ENCODE measurements at regions of chr1 and their contacts with region 1.

Region 1: DNA sequence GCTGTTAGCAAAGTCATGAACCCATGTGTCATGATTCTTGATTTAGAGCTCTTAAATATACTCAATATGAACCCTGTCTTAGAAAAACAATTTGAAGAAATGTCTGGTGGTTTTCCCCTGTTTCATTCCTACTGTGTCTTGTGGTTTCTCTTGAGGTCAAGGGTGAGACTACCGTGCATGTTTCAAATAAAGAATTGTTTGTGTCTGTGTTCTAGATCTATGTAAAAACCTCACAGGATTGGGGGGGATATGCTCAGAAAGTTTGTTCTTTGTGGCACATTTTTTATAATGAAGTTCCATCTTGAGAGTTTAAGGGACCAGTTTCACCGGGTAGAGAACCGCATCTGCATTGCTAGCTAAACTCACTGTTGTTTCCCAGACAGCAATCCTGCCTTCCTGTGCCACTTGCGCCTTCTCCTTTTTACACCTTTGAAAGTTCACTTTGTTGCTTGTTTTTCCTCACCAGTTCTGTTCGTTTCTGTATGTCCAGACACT is 30.9 kb upstream of the CACYBP start:
- DNase-seq: peak; percentile 26
- H3K4me3 Mint-ChIP-seq: peak overlapping the region; percentile 68
- H3K27ac Mint-ChIP-seq: peak overlapping the region; percentile 90
- H3K4me1 Mint-ChIP-seq: peaks cover 75% of the 10 kb centered on the region
- H3K27me3 Mint-ChIP-seq: no peaks in the 10 kb centered on the region

Region 2: DNA sequence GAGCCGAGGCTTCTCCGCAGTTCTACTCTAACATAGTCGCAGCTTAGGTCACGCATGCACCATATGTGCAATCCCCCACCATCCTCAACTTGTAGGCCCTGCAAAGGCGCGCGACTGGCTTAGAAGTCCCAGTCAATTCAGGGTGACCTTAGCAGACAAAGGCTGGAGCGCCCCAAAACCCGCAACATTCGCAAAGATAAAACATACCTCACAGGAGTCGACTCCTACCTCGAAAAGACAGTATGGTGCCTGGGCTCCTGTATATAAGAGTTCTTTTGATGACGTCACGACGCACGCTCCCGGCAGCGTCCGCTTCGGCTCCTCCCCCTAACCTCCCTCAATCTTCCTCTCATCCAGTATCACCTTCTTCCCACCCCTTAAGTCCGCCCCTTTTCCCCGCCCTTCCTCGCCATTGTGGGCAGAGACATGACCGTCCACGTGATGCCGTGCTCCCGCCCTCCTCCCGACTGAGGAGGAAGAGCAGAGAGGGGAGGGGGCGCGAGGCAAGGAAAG is 1101.0 kb before region 1 on chr1 and contains the start of gene GAS5:
- CTCF ChIA-PET with region 1: no interaction called
- POLR2A ChIA-PET with region 1: no interaction called
- intact Hi-C with region 1: loop called (anchors 1 kb)
- DNase-seq: peak; percentile 100
- H3K4me3 Mint-ChIP-seq: peak within 1 kb of the TSS; percentile 99
- H3K27ac Mint-ChIP-seq: peak within 1 kb of the TSS; percentile 98
- H3K4me1 Mint-ChIP-seq: peaks cover 68% of the 10 kb centered on the region
- H3K27me3 Mint-ChIP-seq: peaks cover 3% of the 10 kb centered on the region
- total RNA-seq, gene GAS5: 913 to 929 TPM

Region 3: GRCh38 chr1:174204697-174205308 is 764.0 kb before region 1 on chr1:
- CTCF ChIA-PET with region 1: no interaction called
- POLR2A ChIA-PET with region 1: interaction called, 3 read pairs
- intact Hi-C with region 1: loop called (anchors 5 kb)
- DNase-seq: peak; percentile 47
- H3K4me3 Mint-ChIP-seq: peak overlapping the region; percentile 38
- H3K27ac Mint-ChIP-seq: peak overlapping the region; percentile 76
- H3K4me1 Mint-ChIP-seq: peaks cover 59% of the 10 kb centered on the region
- H3K27me3 Mint-ChIP-seq: no peaks in the 10 kb centered on the region

Region 4: GRCh38 chr1:174815036-174815435 is 153.8 kb before region 1 on chr1:
- CTCF ChIA-PET with region 1: no interaction called
- POLR2A ChIA-PET with region 1: interaction called, 3 read pairs
- intact Hi-C with region 1: loop called (anchors 2 kb)
- DNase-seq: peak; percentile 60
- H3K4me3 Mint-ChIP-seq: no peak overlapping the region
- H3K27ac Mint-ChIP-seq: no peak overlapping the region
- H3K4me1 Mint-ChIP-seq: peaks cover 33% of the 10 kb centered on the region
- H3K27me3 Mint-ChIP-seq: no peaks in the 10 kb centered on the region

Region 5: GRCh38 chr1:174912264-174912663 is 56.5 kb before region 1 on chr1:
- CTCF ChIA-PET with region 1: interaction called, 4 read pairs
- POLR2A ChIA-PET with region 1: interaction called, 5 read pairs
- intact Hi-C with region 1: loop called (anchors 1 kb)
- DNase-seq: peak; percentile 69
- H3K4me3 Mint-ChIP-seq: no peak overlapping the region
- H3K27ac Mint-ChIP-seq: peak overlapping the region; percentile 33
- H3K4me1 Mint-ChIP-seq: peaks cover 59% of the 10 kb centered on the region
- H3K27me3 Mint-ChIP-seq: no peaks in the 10 kb centered on the region

Region 6: DNA sequence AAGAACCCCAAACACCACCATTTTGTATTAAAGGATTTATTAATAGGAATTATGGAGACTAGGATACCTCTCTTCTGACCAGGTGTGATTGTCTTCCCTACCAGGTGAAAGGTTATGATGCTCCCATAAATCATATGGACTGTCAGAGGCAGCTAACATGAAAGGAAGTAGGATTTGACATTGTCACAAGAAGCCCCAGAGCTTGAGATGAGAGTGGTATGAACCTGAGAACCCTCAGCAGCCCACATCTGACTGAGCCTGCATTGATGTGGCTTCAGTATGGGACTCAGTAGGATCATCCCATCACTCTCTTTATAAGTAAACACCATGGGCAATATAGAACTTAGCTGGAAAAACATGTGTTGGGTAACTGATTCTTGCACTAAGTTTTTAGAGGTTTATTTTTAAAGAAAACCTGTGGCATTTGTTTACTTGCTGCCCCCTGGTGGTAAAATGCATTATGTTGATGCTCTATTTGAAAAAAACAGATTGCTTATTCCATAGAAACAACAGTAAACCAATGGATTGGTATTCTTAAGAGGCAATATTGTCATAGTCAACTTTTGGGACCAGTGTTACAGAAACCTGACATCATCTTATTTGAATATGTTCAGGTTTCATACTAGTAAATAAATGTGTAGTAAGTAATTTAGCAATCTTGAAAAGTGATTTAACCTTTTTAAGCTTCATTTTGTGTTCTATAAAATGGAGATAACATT is 14.3 kb after region 1 on chr1:
- CTCF ChIA-PET with region 1: interaction called, 12 read pairs
- POLR2A ChIA-PET with region 1: interaction called, 5 read pairs
- intact Hi-C with region 1: loop called (anchors 2 kb)
- DNase-seq: peak; percentile 42
- H3K4me3 Mint-ChIP-seq: no peak overlapping the region
- H3K27ac Mint-ChIP-seq: no peak overlapping the region
- H3K4me1 Mint-ChIP-seq: peaks cover 20% of the 10 kb centered on the region
- H3K27me3 Mint-ChIP-seq: no peaks in the 10 kb centered on the region

Region 7: GRCh38 chr1:175132436-175132835 is 163.6 kb after region 1 on chr1:
- CTCF ChIA-PET with region 1: no interaction called
- POLR2A ChIA-PET with region 1: no interaction called
- intact Hi-C with region 1: no loop called
- DNase-seq: no peak
- H3K4me3 Mint-ChIP-seq: no peak overlapping the region
- H3K27ac Mint-ChIP-seq: no peak overlapping the region
- H3K4me1 Mint-ChIP-seq: no peaks in the 10 kb centered on the region
- H3K27me3 Mint-ChIP-seq: peaks cover 14% of the 10 kb centered on the region

Region 8: DNA sequence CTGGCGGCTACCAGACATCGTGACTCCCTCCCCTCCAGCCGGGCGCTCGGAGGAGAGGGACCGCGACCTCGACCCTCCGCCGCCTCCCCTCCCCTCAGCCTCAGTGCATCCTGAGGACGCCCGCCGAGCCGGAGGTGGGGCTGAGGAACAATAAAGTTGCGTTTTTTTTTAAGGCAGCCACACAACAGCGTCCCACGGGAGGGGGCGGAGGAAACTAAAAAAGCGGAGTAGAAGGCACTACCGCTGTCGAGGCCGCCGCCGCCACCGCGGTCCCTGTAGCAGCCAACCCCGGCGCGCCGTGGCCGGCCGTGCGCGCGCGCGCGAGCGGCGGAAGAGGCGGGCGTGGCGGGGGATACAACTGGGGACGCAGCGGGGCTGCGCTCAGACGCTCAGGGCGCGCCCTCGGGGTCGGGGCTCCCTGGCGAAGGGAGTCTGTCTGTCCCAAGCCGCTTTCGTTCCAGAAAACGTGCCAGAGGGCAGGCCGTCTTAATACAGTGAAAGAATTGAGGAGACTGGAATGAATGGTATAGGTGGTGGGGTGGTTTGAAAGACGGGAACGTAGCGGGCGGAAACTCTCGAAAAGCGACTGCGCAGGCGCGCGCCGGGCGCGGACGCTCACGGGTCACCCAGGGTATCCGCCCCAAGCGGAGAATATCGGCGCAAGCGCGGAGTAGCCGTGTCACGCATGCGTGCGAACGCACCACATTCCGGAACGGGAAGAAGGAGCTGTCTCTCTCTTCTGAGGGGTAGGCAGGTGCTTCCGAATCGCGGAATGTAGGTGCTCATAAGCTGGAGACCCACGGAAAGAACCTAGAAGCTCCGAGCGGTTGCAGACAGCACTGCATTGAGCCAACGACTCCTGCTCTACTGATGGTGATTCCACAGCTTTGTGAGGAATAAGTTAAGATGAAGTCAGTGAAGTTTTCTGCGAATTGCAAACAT is 1238.4 kb after region 1 on chr1 and contains the start of gene COP1:
- CTCF ChIA-PET with region 1: no interaction called
- POLR2A ChIA-PET with region 1: no interaction called
- intact Hi-C with region 1: loop called (anchors 5 kb)
- DNase-seq: peak; percentile 98
- H3K4me3 Mint-ChIP-seq: peak within 1 kb of the TSS; percentile 99
- H3K27ac Mint-ChIP-seq: peak within 1 kb of the TSS; percentile 97
- H3K4me1 Mint-ChIP-seq: peaks cover 24% of the 10 kb centered on the region
- H3K27me3 Mint-ChIP-seq: no peaks in the 10 kb centered on the region
- total RNA-seq, gene COP1: 34.2 to 34.7 TPM

Measured in activated CD4-positive, alpha-beta memory T cell treated with anti-CD3 and anti-CD28 coated beads for 36 hours (primary cell).